ENCODE measurements at regions of chr2 and their contacts with region 1.

Region 1: DNA sequence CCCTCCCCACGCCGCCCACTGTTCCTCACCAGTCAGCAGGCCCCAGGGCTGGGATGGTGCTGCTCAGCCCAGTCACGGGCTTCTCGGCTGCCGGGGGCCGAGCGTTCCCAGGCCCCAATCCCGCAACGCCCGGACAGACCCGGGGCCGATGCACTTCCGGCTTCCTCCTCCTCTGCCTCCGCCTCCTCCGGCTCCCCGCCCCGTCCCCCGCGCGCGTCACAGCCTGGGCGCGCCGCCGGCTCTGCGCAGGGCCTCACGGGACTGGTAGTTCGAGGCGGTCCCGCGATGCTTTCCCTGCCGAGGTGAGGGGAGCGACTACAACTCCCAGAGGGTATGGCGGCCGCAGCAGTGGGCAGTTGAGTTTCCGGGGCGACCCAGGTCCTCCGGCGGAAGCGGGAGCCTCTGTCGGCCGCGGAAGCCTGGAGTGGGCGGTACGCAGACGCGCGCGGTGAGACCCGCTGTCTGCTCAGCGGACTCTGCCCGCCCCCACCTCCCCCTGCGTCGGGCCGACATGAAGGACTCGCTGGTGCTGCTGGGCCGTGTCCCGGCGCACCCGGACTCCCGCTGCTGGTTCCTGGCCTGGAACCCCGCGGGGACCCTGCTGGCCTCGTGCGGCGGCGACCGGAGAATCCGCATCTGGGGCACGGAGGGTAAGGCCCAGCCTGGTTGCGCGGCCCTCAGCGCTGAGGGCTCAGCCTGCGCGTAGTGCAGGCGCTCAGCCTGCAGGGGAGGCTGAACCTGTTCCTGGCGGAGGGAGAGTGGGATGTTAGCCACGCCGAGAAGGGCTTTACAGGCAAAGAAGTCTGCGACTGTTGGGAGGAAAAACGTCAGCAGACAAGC is at the starts of genes CIAO1 and TMEM127:
- DNase-seq: peak; percentile 90
- ATAC-seq: peak; percentile 94
- H3K4me3 ChIP-seq: peak within 1 kb of the TSS; percentile 98
- H3K27ac ChIP-seq: peak within 1 kb of the TSS; percentile 79
- H3K4me1 ChIP-seq: peaks cover 16% of the 10 kb centered on the region; the same call in 1 of the 2 replicates
- H3K27me3 ChIP-seq: no peaks in the 10 kb centered on the region
- CTCF ChIP-seq: peak; percentile 15 to 44 (median 40); a peak in 4 of 6 replicates
- EP300 ChIP-seq: peak; percentile 9 to 12; a peak in 1 of 4 replicates
- POLR2A ChIP-seq: peak; percentile 92
- RAD21 ChIP-seq: no peak
- polyA plus RNA-seq, gene CIAO1: 8.3 to 15.6 TPM
- polyA plus RNA-seq, gene TMEM127: 2.6 to 3.0 TPM

Region 2: GRCh38 chr2:96024336-96025193 is 241.5 kb before region 1 on chr2:
- CTCF ChIA-PET with region 1: interaction called, 4 read pairs
- POLR2A ChIA-PET with region 1: no interaction called
- RAD21 ChIA-PET with region 1: interaction called, 5 read pairs
- SMC1A ChIA-PET with region 1: interaction called, 3 read pairs
- in situ Hi-C with region 1: loop called (anchors 25 kb)
- intact Hi-C with region 1: no loop called
- DNase-seq: no peak
- ATAC-seq: no peak
- H3K4me3 ChIP-seq: no peak overlapping the region
- H3K27ac ChIP-seq: no peak overlapping the region
- H3K4me1 ChIP-seq: no peaks in the 10 kb centered on the region
- H3K27me3 ChIP-seq: no peaks in the 10 kb centered on the region
- CTCF ChIP-seq: no peak
- EP300 ChIP-seq: no peak
- POLR2A ChIP-seq: no peak
- RAD21 ChIP-seq: no peak

Region 3: GRCh38 chr2:96138179-96139145 is 127.6 kb before region 1 on chr2 and contains the start of gene ASTL:
- CTCF ChIA-PET with region 1: interaction called, 23 read pairs
- POLR2A ChIA-PET with region 1: interaction called, 4 read pairs
- RAD21 ChIA-PET with region 1: interaction called, 13 read pairs
- SMC1A ChIA-PET with region 1: interaction called, 19 read pairs
- in situ Hi-C with region 1: loop called (anchors 5 kb)
- intact Hi-C with region 1: loop called (anchors 2 kb)
- DNase-seq: no peak
- ATAC-seq: peak; percentile 37
- H3K4me3 ChIP-seq: no peak within 1 kb of the TSS
- H3K27ac ChIP-seq: no peak within 1 kb of the TSS
- H3K4me1 ChIP-seq: peaks cover 13% of the 10 kb centered on the region
- H3K27me3 ChIP-seq: no peaks in the 10 kb centered on the region; a peak in 1 of 4 replicates
- CTCF ChIP-seq: peak; percentile 67 to 92 (median 71)
- EP300 ChIP-seq: no peak
- POLR2A ChIP-seq: no peak
- RAD21 ChIP-seq: peak; percentile 92
- polyA plus RNA-seq, gene ASTL: not detected

Region 4: DNA sequence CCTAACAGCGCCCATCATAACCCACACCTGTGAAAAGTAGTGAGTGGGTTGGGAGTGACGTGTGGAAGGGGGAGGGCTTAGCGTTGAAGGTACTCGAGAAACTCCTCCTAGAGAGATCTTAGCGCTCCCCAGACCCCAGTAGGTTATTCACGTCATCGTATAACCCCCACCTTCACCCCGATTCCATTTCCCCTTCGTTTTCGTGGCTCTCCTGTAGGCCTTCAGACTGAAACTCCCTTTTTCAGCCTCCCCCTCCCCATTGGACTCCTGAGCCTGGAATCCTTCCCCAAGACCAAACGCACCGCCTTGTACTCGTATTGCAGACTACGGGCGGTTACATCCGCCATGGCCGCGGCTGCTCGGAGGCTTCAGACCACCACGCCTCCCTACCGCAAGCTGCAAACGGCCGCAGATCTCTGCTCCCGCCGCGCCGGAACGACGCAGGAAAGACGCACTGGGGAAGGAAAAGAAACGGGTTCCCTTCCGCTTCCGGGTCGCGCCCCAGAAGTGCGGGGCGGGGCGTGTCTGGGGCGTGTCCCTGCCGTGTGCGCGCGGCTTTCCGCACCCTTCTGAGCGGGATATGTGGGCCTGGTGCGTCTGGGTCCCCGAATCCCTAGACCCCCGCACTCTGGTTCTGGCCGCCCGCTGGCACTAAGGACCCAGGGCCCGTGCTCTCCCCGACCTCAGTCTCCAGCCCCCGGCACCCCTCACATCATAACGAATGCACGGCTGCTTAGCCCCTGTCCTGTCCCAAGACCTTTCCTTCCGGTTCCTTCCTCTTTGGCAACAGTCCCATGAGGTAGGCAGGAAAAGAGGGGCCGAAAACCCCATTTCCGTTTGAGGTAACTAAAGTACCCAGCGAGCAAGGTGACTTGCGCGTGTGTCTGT is 39.3 kb after region 1 on chr2 and contains the start of gene SNRNP200:
- CTCF ChIA-PET with region 1: interaction called, 3 read pairs
- POLR2A ChIA-PET with region 1: no interaction called
- RAD21 ChIA-PET with region 1: interaction called, 4 read pairs
- SMC1A ChIA-PET with region 1: interaction called, 4 read pairs
- in situ Hi-C with region 1: no loop called
- intact Hi-C with region 1: loop called (anchors 1 kb)
- DNase-seq: no peak
- ATAC-seq: peak; percentile 98
- H3K4me3 ChIP-seq: peak within 1 kb of the TSS; percentile 90
- H3K27ac ChIP-seq: peak within 1 kb of the TSS; percentile 84
- H3K4me1 ChIP-seq: peaks cover 5% of the 10 kb centered on the region
- H3K27me3 ChIP-seq: no peaks in the 10 kb centered on the region
- CTCF ChIP-seq: no peak
- EP300 ChIP-seq: 0 out of 4 replicates have a peak, but pooled peaks of 1 of the 2 experiments have one; percentile 33
- POLR2A ChIP-seq: peak; percentile 94
- RAD21 ChIP-seq: no peak
- polyA plus RNA-seq, gene SNRNP200: 61.6 to 64.6 TPM

Region 5: DNA sequence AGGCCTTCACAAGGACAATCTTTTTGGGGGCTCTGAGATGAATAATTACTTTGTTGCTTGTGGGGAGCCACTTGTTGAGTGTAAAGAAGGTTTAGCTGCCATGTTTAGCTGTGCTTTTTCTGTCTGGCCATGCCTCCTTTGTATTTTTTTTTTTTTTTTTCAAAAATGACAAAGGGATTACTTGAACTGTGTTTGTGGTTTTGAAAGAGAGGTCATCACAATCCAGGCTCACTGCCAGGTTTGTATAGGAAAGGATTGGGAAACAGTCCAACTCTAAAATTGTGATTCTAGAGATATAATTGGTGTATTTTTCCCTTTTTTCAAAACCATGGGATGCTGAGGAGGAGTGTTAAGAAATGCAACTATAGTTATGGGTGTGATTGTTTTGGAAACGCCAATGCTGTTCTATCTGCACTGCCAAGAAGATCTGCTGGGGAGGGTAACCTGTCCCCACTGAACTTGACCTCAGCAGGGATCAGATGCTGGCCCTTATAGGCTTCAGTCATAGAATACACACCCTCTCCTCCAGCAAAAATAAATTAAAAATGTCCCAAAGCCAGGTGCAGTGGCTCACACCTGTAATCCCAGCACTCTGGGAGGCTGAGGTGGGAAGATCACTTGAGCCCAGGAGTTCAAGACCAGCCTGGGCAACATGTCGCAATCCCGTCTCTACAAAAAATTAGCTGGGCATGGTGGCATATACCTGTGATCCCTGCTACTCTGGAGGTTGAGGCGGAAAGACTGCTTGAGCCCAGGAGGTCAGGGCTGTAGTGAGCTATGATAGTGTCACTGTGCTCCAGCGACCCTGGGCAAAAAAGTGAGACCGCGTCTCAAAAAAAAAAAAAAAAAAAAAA is 63.6 kb after region 1 on chr2:
- CTCF ChIA-PET with region 1: no interaction called
- POLR2A ChIA-PET with region 1: interaction called, 10 read pairs
- RAD21 ChIA-PET with region 1: interaction called, 3 read pairs
- SMC1A ChIA-PET with region 1: no interaction called
- in situ Hi-C with region 1: no loop called
- intact Hi-C with region 1: loop called (anchors 5 kb)
- DNase-seq: no peak
- ATAC-seq: no peak
- H3K4me3 ChIP-seq: no peak overlapping the region
- H3K27ac ChIP-seq: no peak overlapping the region
- H3K4me1 ChIP-seq: peaks cover 15% of the 10 kb centered on the region
- H3K27me3 ChIP-seq: no peaks in the 10 kb centered on the region
- CTCF ChIP-seq: no peak
- EP300 ChIP-seq: no peak
- POLR2A ChIP-seq: no peak
- RAD21 ChIP-seq: no peak

Region 6: DNA sequence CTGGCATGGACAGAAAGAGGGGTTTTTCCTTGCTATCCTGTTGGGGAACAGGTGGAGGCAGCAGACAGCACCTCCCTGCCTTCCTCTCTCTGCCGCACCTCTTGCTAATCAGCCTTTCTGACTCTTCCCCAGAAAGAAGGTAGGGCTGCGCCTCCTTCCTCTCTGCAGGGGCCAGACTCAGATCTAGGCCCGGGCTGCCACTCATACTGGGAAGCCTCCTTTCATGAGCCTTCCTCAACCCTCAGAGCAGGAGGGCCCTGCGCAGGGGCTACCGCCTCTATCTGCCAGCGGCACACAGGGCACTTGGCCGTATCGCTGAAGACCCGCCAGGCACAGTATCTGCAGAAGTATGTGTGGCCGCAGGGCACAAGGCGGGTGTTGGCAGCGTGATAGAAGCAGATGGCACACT is 232.0 kb after region 1 on chr2:
- CTCF ChIA-PET with region 1: no interaction called
- POLR2A ChIA-PET with region 1: no interaction called
- RAD21 ChIA-PET with region 1: no interaction called
- SMC1A ChIA-PET with region 1: no interaction called
- in situ Hi-C with region 1: no loop called
- intact Hi-C with region 1: no loop called
- DNase-seq: no peak
- ATAC-seq: no peak
- H3K4me3 ChIP-seq: no peak overlapping the region
- H3K27ac ChIP-seq: no peak overlapping the region
- H3K4me1 ChIP-seq: peaks cover 23% of the 10 kb centered on the region
- H3K27me3 ChIP-seq: no peaks in the 10 kb centered on the region
- CTCF ChIP-seq: no peak
- EP300 ChIP-seq: no peak
- POLR2A ChIP-seq: no peak
- RAD21 ChIP-seq: no peak

Region 7: DNA sequence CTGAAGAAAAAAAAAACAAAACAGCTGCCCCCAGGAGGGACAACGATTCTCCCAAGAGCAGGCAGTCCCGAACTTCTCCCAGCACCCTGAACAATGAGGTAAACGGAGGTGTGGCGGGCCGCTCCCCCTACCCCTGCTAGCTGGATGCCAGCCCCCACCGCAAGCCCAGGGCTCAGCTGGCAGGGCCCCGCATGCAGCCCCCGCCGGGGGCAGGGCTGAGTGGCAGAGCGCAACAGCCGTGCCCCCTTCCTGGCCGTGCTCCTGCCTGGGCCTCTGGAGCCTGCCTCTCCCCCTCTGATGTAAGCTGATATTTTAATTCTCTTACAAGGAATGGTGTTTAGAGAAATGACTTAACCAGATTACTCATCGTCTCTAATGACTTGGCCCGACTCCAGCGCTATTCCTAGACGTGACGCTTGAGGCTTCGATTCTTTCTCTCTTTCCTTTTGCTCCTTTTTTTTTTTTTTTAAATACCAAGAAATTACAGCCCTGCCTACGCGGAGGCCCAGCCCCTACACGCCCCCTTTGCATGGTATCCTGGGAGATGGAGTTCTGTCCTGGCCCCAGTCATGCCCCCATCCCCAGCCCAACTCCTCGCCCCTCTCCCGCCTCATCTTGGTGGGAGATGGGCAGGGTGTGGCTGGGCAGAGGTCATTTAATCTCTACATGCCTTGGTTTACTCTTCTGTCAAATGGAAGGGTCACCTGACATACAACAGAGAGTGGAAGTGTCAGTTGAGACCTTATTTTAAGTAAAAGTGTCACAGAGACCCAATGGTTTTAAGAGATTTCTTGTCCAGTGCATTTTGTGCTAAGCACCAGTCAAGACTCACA is 266.0 kb after region 1 on chr2:
- CTCF ChIA-PET with region 1: no interaction called
- POLR2A ChIA-PET with region 1: no interaction called
- RAD21 ChIA-PET with region 1: no interaction called
- SMC1A ChIA-PET with region 1: no interaction called
- in situ Hi-C with region 1: no loop called
- intact Hi-C with region 1: no loop called
- DNase-seq: peak; percentile 94
- ATAC-seq: peak; percentile 50
- H3K4me3 ChIP-seq: peak overlapping the region; percentile 67
- H3K27ac ChIP-seq: peak overlapping the region; percentile 57; the same call in 1 of the 2 replicates
- H3K4me1 ChIP-seq: peaks cover 73% of the 10 kb centered on the region
- H3K27me3 ChIP-seq: no peaks in the 10 kb centered on the region
- CTCF ChIP-seq: no peak
- EP300 ChIP-seq: peak in 1 of 2 experiments; percentile 47; a peak in 3 of 4 replicates
- POLR2A ChIP-seq: peak; percentile 55; the same call in 1 of the 2 replicates
- RAD21 ChIP-seq: no peak

Measured in GM12878 (cell line).